ENCODE measurements at regions of chr18 and their contacts with region 1.

Region 1: GRCh38 chr18:36744261-36744876 is 84.4 kb downstream of the TPGS2 start:
- DNase-seq: no peak
- ATAC-seq: peak; percentile 17
- H3K4me3 ChIP-seq: no peak overlapping the region
- H3K27ac ChIP-seq: no peak overlapping the region
- H3K4me1 ChIP-seq: no peaks in the 10 kb centered on the region
- H3K27me3 ChIP-seq: peaks cover 2 to 30% of the 10 kb centered on the region in 2 experiments; a peak in 4 of 5 replicates
- CTCF ChIP-seq: no peak
- EP300 ChIP-seq: no peak
- POLR2A ChIP-seq: no peak
- RAD21 ChIP-seq: no peak

Region 2: GRCh38 chr18:36697905-36698304 is 46.5 kb before region 1 on chr18:
- CTCF ChIA-PET with region 1: no interaction called
- POLR2A ChIA-PET with region 1: no interaction called
- in situ Hi-C with region 1: loop called (anchors 5 kb)
- intact Hi-C with region 1: no loop called
- DNase-seq: no peak
- ATAC-seq: no peak
- H3K4me3 ChIP-seq: no peak overlapping the region
- H3K27ac ChIP-seq: no peak overlapping the region
- H3K4me1 ChIP-seq: no peaks in the 10 kb centered on the region
- H3K27me3 ChIP-seq: peaks cover 10 to 25% of the 10 kb centered on the region in 2 experiments; a peak in 4 of 5 replicates
- CTCF ChIP-seq: no peak
- EP300 ChIP-seq: no peak
- POLR2A ChIP-seq: no peak
- RAD21 ChIP-seq: no peak